ENCODE measurements at regions of chr1 and their contacts with region 1.

Region 1: GRCh38 chr1:178501705-178502329 is 5.1 kb upstream of the CLEC20A start:
- H3K4me3 Mint-ChIP-seq: no peak overlapping the region
- H3K27ac Mint-ChIP-seq: no peak overlapping the region
- H3K4me1 Mint-ChIP-seq: no peaks in the 10 kb centered on the region
- H3K27me3 Mint-ChIP-seq: no peaks in the 10 kb centered on the region

Region 2: GRCh38 chr1:178031856-178032320 is 469.9 kb before region 1 on chr1:
- intact Hi-C with region 1: loop called (anchors 5 kb)
- H3K4me3 Mint-ChIP-seq: no peak overlapping the region
- H3K27ac Mint-ChIP-seq: no peak overlapping the region
- H3K4me1 Mint-ChIP-seq: peaks cover 7% of the 10 kb centered on the region
- H3K27me3 Mint-ChIP-seq: no peaks in the 10 kb centered on the region

Region 3: GRCh38 chr1:178055779-178056471 is 445.9 kb before region 1 on chr1:
- intact Hi-C with region 1: no loop called
- H3K4me3 Mint-ChIP-seq: peak overlapping the region; percentile 43
- H3K27ac Mint-ChIP-seq: peak overlapping the region; percentile 85
- H3K4me1 Mint-ChIP-seq: peaks cover 67% of the 10 kb centered on the region
- H3K27me3 Mint-ChIP-seq: peaks cover 2% of the 10 kb centered on the region

Region 4: DNA sequence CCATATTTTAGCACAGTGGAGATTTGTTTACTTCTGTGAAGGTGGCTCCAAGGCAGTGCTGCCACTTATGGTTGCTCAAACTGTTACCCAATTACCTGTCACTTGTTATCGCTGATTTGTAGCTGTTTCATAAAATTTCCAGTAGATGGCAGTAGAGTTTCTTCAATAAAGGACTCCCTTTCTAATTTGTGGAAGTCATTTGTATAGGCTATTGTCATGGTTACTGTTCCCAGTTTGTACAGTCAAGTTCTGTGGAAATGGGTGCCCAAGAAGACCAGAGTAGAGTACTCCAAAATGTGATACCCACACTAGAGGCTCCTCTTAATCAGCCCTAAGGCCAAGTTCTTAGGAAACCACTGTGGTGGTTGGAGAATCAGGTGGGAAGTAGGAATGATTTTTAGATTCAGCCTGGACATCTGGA is 191.1 kb before region 1 on chr1:
- intact Hi-C with region 1: loop called (anchors 1 kb)
- H3K4me3 Mint-ChIP-seq: no peak overlapping the region
- H3K27ac Mint-ChIP-seq: no peak overlapping the region
- H3K4me1 Mint-ChIP-seq: peaks cover 23% of the 10 kb centered on the region
- H3K27me3 Mint-ChIP-seq: no peaks in the 10 kb centered on the region